Activated CD4-positive, alpha-beta memory T cell treated with anti-CD3 and anti-CD28 coated beads for 36 hours (primary cell): ENCODE measurements at regions of chr9 and their contacts with region 1.

Region 1: GRCh38 chr9:129131300-129132145 is 20.3 kb downstream of the PTPA start:
- DNase-seq: peak; percentile 89
- H3K4me3 Mint-ChIP-seq: no peak overlapping the region
- H3K27ac Mint-ChIP-seq: no peak overlapping the region
- H3K4me1 Mint-ChIP-seq: peaks cover 4% of the 10 kb centered on the region
- H3K27me3 Mint-ChIP-seq: no peaks in the 10 kb centered on the region

Region 2: GRCh38 chr9:129080602-129081387 is 50.7 kb before region 1 on chr9 and contains the start of gene DOLPP1:
- CTCF ChIA-PET with region 1: interaction called, 11 read pairs
- POLR2A ChIA-PET with region 1: no interaction called
- intact Hi-C with region 1: no loop called
- DNase-seq: peak; percentile 99
- H3K4me3 Mint-ChIP-seq: peak within 1 kb of the TSS; percentile 83
- H3K27ac Mint-ChIP-seq: peak within 1 kb of the TSS; percentile 42
- H3K4me1 Mint-ChIP-seq: peaks cover 17% of the 10 kb centered on the region
- H3K27me3 Mint-ChIP-seq: no peaks in the 10 kb centered on the region
- total RNA-seq, gene DOLPP1: 13.9 to 15.3 TPM

Region 3: GRCh38 chr9:129237195-129237611 is 105.7 kb after region 1 on chr9:
- CTCF ChIA-PET with region 1: interaction called, 11 read pairs
- POLR2A ChIA-PET with region 1: no interaction called
- intact Hi-C with region 1: no loop called
- DNase-seq: peak; percentile 77
- H3K4me3 Mint-ChIP-seq: peak overlapping the region; percentile 68
- H3K27ac Mint-ChIP-seq: peak overlapping the region; percentile 88
- H3K4me1 Mint-ChIP-seq: peaks cover 49% of the 10 kb centered on the region
- H3K27me3 Mint-ChIP-seq: no peaks in the 10 kb centered on the region

Region 4: DNA sequence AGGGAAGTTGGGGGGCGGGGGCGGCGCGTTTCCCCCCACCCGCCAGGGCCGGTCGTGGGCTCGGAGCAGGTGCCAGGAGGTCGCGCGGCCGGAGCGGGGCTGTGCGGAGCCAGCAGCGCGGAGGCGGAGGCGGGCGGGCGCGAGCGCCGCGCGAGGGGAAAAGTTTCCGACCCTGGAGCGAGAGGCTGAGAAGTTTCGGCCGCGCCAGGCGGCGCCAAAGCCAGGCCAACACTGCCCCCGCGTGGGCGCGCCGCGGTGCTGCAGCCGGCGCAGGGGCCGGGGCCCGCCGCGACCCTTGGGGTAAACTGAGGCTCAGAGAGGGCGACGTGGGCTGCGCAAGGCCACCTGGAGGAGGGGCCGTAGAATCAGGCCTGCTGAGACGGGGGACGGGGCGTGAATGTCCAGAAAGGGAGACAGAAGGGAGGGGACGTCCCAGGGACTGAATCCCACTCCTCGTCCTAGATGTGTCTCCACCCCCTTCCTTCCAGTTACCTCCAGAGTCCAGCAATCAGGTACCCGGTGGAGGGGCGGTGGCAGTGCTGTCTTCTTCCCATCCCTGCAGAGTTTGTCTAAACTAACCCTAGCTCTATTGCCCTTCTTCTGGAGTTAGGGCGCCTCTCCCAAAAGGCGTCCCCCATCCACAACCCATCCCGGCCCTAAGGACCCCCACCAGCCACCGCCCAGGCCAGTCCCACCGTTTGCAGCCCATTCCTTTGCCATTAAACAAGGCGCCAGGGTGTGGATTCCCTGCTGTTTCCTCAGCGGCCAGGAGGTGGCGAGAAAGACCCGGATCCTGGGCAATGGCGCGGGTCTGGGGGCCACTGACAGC is 479.2 kb after region 1 on chr9:
- CTCF ChIA-PET with region 1: interaction called, 16 read pairs
- POLR2A ChIA-PET with region 1: no interaction called
- intact Hi-C with region 1: loop called (anchors 2 kb)
- DNase-seq: peak; percentile 84
- H3K4me3 Mint-ChIP-seq: peak overlapping the region; percentile 69
- H3K27ac Mint-ChIP-seq: peak overlapping the region; percentile 54
- H3K4me1 Mint-ChIP-seq: peaks cover 31% of the 10 kb centered on the region
- H3K27me3 Mint-ChIP-seq: peaks cover 2% of the 10 kb centered on the region

Region 5: GRCh38 chr9:129783516-129784361 is 652.2 kb after region 1 on chr9:
- CTCF ChIA-PET with region 1: interaction called, 15 read pairs
- POLR2A ChIA-PET with region 1: no interaction called
- intact Hi-C with region 1: loop called (anchors 5 kb)
- DNase-seq: peak; percentile 80
- H3K4me3 Mint-ChIP-seq: no peak overlapping the region
- H3K27ac Mint-ChIP-seq: no peak overlapping the region
- H3K4me1 Mint-ChIP-seq: no peaks in the 10 kb centered on the region
- H3K27me3 Mint-ChIP-seq: no peaks in the 10 kb centered on the region